ENCODE measurements at regions of chr10 and their contacts with region 1.

Region 1: GRCh38 chr10:28400681-28401080 is 97.8 kb upstream of the MPP7 start:
- DNase-seq: peak; percentile 91 to 95 (median 95)
- H3K4me3 ChIP-seq: peak overlapping the region in 1 of 3 experiments; percentile 45
- H3K4me3 Mint-ChIP-seq: peak overlapping the region; percentile 51 to 58
- H3K27ac ChIP-seq: peak overlapping the region; percentile 98 to 100
- H3K27ac Mint-ChIP-seq: peak overlapping the region; percentile 96 to 100 (median 99)
- H3K4me1 ChIP-seq: peaks cover 68 to 81% of the 10 kb centered on the region in 2 donors
- H3K4me1 Mint-ChIP-seq: peaks cover 78% of the 10 kb centered on the region
- H3K27me3 ChIP-seq: no peaks in the 10 kb centered on the region
- H3K27me3 Mint-ChIP-seq: peaks cover 0 to 3% (median 3%) of the 10 kb centered on the region in 3 donors
- CTCF ChIP-seq: no peak

Region 2: GRCh38 chr10:28480628-28480965 is 79.9 kb after region 1 on chr10:
- intact Hi-C with region 1: loop called in 1 of 2 experiments (anchors 5 kb)
- DNase-seq: no peak
- H3K4me3 ChIP-seq: peak overlapping the region in 1 of 3 experiments; percentile 17
- H3K4me3 Mint-ChIP-seq: no peak overlapping the region
- H3K27ac ChIP-seq: peak overlapping the region; percentile 80 to 82
- H3K27ac Mint-ChIP-seq: peak overlapping the region; percentile 86 to 97 (median 95)
- H3K4me1 ChIP-seq: peaks cover 47 to 48% of the 10 kb centered on the region in 2 donors
- H3K4me1 Mint-ChIP-seq: peaks cover 44% of the 10 kb centered on the region
- H3K27me3 ChIP-seq: no peaks in the 10 kb centered on the region
- H3K27me3 Mint-ChIP-seq: no peaks in the 10 kb centered on the region
- CTCF ChIP-seq: no peak

Region 3: GRCh38 chr10:28652696-28653095 is 252.0 kb after region 1 on chr10:
- intact Hi-C with region 1: no loop called
- DNase-seq: no peak
- H3K4me3 ChIP-seq: no peak overlapping the region
- H3K4me3 Mint-ChIP-seq: no peak overlapping the region
- H3K27ac ChIP-seq: no peak overlapping the region
- H3K27ac Mint-ChIP-seq: no peak overlapping the region
- H3K4me1 ChIP-seq: no peaks in the 10 kb centered on the region
- H3K4me1 Mint-ChIP-seq: no peaks in the 10 kb centered on the region
- H3K27me3 ChIP-seq: no peaks in the 10 kb centered on the region
- H3K27me3 Mint-ChIP-seq: peaks cover 3 to 15% (median 7%) of the 10 kb centered on the region in 3 donors
- CTCF ChIP-seq: no peak

Region 4: GRCh38 chr10:28722065-28722803 is 321.6 kb after region 1 on chr10:
- intact Hi-C with region 1: no loop called
- DNase-seq: no peak
- H3K4me3 ChIP-seq: no peak overlapping the region
- H3K4me3 Mint-ChIP-seq: peak overlapping the region in 1 of 2 donors; percentile 75
- H3K27ac ChIP-seq: no peak overlapping the region
- H3K27ac Mint-ChIP-seq: no peak overlapping the region
- H3K4me1 ChIP-seq: peaks cover 0 to 3% of the 10 kb centered on the region in 2 donors
- H3K4me1 Mint-ChIP-seq: peaks cover 8% of the 10 kb centered on the region
- H3K27me3 ChIP-seq: peaks cover 26 to 46% of the 10 kb centered on the region in 2 donors
- H3K27me3 Mint-ChIP-seq: peaks cover 43 to 57% (median 56%) of the 10 kb centered on the region in 3 donors
- CTCF ChIP-seq: no peak

Measured in CD14-positive monocyte (primary cell).